Ascending aorta (tissue), 2 donors: ENCODE measurements at regions of chr2 and their contacts with region 1.

Region 1: GRCh38 chr2:96907115-96908041 is 37.5 kb upstream of the SEMA4C start:
- DNase-seq: peak; percentile 77 to 97
- H3K4me3 ChIP-seq: peak overlapping the region; percentile 40 to 56
- H3K27ac ChIP-seq: peak overlapping the region; percentile 95 to 98
- H3K4me1 ChIP-seq: peaks cover 7 to 38% of the 10 kb centered on the region in 2 donors
- H3K27me3 ChIP-seq: no peaks in the 10 kb centered on the region
- CTCF ChIP-seq: peak in 1 of 3 experiments; percentile 21

Region 2: GRCh38 chr2:96739633-96740428 is 167.5 kb before region 1 on chr2 and contains the start of gene LMAN2L:
- intact Hi-C with region 1: loop called (anchors 2 kb)
- DNase-seq: peak; percentile 97 to 99
- H3K4me3 ChIP-seq: peak within 1 kb of the TSS; percentile 80 to 92
- H3K27ac ChIP-seq: peak within 1 kb of the TSS; percentile 66 to 73
- H3K4me1 ChIP-seq: peaks cover 0 to 19% of the 10 kb centered on the region in 2 donors
- H3K27me3 ChIP-seq: no peaks in the 10 kb centered on the region
- CTCF ChIP-seq: peak in 1 of 3 experiments; percentile 9
- total RNA-seq, gene LMAN2L: 9.5 TPM

Region 3: DNA sequence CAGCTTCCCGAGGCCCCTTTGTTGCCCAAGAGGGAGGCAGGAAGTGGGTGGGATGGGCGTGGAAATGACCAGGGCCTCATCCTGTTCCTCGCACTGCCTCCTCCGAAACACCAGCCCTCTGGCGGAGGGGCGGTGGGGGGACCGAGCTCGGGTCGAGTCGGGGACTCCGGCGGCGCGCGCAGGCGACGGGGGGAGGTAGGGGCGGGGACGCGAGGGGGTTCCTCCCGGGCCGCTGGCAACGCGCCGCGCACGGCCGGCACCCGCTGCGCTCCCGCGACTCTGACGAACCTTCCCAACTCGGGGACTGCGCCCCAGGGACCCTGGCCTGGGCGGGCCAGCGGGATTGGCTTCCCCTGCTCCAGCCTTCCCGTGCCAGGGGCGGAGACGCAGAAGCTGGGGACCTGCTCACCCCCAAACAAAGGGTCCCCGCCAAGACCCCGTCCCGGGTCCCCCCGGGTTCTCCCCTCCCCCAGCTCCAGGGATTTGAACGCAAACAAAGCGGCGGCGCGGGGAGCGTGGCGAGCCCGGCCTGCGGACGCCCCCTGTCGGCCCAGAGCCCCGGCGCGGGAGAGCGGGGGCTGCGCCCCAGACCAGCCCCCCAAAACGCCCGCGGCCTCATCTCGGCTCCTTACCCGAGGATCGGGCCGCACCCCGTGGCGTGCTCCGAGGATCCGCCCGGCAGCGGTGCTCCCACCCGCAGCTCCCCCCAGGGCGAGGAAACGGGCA is 38.7 kb before region 1 on chr2:
- intact Hi-C with region 1: loop called (anchors 1 kb)
- DNase-seq: peak; percentile 73 to 95
- H3K4me3 ChIP-seq: peak overlapping the region; percentile 88 to 98
- H3K27ac ChIP-seq: peak overlapping the region; percentile 96 to 99
- H3K4me1 ChIP-seq: peaks cover 18 to 38% of the 10 kb centered on the region in 2 donors
- H3K27me3 ChIP-seq: no peaks in the 10 kb centered on the region
- CTCF ChIP-seq: peak; percentile 51 to 66 (median 62)

Region 4: DNA sequence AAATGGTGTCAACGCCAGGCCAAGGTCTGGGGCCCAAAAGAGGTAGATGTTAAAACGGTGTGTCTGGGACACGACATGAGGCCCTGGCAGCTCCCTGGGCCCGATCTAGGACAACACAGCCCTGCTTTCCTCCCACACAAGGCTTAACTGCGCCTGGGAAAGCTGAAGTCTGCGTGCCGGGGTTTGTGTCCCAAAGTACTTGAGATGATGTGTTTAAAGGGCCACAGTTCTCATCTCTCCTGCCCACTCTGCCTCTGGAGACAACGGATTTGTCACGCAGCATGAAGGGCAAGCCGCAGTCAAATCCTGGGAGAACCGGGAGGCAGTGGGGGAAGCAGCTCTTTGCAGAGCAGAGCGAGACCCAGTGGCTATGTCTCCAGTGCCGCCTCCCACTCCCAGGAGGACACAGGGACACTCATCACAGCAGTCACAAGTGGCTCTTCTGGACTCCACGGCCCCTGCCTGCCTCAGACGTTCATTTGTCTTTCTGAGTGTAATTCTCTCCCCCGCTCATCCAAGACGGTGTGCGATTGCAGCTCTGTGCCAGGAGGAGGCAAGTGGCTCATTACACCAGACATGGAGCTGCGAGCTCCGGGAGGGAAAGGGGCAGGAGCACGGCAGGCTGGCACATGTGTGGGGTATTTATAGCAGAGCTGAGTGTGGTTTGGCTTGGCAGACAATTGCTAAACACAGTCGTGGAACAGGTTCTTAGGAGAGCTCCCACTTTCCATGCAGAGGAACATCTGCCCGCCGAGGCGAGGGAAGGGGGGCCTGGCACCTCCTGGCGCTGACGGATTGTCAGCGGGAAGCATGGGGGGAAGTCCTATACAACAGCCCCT is 20.2 kb after region 1 on chr2:
- intact Hi-C with region 1: loop called (anchors 1 kb)
- DNase-seq: no peak
- H3K4me3 ChIP-seq: peak overlapping the region; percentile 42 to 62
- H3K27ac ChIP-seq: peak overlapping the region in 1 of 2 donors; percentile 10
- H3K4me1 ChIP-seq: peaks cover 0 to 3% of the 10 kb centered on the region in 2 donors
- H3K27me3 ChIP-seq: no peaks in the 10 kb centered on the region
- CTCF ChIP-seq: peak in 2 of 3 experiments; percentile 14 to 26